ENCODE measurements at regions of chr1 and their contacts with region 1.

Region 1: DNA sequence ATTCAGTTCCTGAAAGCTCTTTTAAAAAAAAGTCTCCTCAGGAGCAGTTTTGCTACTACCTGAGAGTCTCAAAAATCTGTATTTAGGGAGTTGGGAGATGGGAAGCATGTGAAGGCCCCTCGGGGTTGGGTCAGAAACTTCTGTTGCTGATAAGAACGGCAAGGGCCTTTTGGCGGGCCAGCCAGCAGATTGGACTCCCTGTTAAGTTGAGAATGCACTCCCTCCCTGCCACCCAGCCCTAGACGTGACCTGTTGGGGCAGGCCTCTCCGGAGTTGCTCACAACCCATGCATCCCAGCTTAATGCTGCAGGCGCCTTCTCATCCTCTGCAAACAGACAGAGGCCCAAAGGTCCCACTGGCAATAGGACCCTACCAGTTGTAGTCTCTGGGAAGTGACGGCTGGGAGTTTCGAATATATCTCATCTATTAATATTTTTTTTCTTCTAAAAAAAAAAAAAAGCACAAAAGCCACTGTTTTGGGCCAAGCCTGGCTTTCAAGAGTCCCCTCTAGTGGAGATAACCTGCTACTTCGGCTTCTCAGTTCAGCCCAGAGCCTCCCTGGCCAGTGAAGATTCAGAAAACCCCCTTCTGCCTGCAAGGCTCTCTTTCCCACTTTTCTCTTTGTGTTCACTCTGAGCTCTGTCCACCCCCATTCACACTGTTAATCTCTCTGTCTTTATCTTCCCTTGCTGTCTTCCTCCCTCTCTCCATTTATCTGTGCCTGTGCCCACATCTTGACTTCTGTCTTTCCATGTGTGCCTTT is 5.3 kb downstream of the PLXNA2 start:
- DNase-seq: peak; percentile 56
- H3K4me3 ChIP-seq: no peak overlapping the region
- H3K27ac ChIP-seq: peak overlapping the region; percentile 18 to 31
- H3K4me1 ChIP-seq: peaks cover 6% of the 10 kb centered on the region
- H3K27me3 ChIP-seq: no peaks in the 10 kb centered on the region
- CTCF ChIP-seq: peak in 3 of 4 experiments; percentile 34 to 66 (median 42)
- POLR2A ChIP-seq: no peak

Region 2: DNA sequence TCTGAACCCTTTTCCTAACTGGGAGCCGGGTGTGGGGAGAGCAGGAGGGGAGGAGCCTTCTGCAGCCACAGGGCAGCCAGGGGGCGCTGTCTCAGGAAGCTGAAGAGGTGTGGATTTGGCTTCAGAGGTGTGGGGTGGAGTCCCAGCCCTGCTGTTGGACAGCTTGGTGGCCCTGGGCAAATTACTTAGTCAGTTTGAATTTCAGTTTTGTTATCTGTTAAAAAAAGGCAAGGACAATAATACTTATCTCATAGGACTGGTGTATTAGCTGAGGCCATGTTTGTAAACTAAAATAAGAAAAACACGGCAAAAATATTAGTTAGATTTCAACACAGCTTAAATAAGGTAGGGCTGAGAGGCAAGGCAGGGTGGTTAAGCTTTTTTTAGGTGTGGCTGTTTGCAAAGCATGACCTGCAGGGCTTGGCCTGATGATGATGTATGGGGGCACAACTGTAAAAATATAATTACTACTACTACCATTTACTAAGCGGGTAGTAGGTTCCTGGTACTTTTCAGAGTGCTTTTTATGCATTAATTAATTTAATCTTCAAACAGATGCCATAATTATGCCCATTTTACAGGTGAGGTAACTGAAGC is 106.5 kb before region 1 on chr1:
- intact Hi-C with region 1: loop called (anchors 5 kb)
- DNase-seq: peak; percentile 82
- H3K4me3 ChIP-seq: no peak overlapping the region
- H3K27ac ChIP-seq: no peak overlapping the region
- H3K4me1 ChIP-seq: no peaks in the 10 kb centered on the region
- H3K27me3 ChIP-seq: no peaks in the 10 kb centered on the region
- CTCF ChIP-seq: peak; percentile 57 to 90 (median 86)
- POLR2A ChIP-seq: no peak

Region 3: DNA sequence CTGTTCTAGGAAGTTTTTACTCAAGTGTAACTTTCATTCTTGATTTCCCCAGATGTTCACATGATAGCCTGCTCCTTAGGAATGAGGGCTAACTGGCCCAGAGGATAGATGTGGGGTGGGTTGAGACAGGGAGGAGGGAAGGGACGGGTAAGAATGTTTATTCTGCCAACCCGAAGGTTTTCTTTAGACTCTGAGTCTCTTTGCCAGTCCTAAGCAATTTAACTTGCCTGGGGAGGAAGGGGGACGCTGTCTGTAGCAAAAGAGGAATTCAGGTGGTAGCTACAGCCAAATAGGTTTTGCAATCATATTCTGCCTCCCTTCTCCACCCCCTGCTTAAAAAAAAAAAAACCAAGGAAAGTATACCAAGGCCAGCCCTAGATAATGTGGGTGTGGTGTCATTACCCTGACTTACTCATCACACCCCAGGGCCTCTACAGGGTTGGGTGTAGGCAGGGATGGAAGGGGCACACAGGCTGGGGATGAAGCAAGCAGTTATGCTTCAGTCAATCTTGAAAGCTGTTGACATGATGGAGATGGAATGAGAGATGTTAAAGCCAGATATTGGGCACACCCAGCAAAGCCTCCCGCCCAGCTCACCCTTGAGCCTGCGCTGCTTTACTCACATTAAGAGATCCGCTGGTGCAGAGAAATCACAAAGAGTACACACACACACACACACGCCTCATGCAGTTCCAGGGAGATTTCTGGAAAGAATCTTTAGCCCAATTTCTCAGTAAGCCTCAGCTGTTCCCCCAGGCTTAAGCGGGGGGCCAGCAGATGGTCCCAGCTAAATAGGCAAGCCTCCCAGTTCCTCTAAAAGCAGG is 54.6 kb before region 1 on chr1:
- intact Hi-C with region 1: loop called (anchors 10 kb)
- DNase-seq: peak; percentile 37
- H3K4me3 ChIP-seq: no peak overlapping the region
- H3K27ac ChIP-seq: peak overlapping the region; percentile 60 to 62
- H3K4me1 ChIP-seq: peaks cover 1% of the 10 kb centered on the region
- H3K27me3 ChIP-seq: no peaks in the 10 kb centered on the region
- CTCF ChIP-seq: no peak
- POLR2A ChIP-seq: no peak

Measured in prostate gland (tissue), 2 donors.